ENCODE measurements at regions of chrX and their contacts with region 1.

Region 1: DNA sequence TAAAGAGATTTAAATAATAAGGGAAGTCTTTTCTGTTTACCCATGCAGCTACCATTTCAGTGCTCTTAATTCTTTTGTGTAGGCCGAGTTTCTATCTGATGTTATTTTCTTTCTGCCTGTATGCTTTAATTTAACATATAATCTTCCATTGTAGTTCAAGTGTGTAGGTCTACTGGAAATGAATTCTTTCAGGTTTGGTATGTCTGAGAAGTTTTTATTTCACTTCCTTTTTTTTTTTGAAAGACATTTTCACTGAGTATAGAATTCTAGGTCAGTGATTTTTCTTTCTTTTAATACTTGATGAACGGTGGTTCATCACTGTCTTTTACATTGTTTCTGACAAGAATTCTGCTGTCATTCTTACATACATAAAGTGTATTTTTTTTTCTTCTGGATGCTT is 42.1 kb downstream of the VAMP7 start:
- DNase-seq: no peak
- H3K4me3 ChIP-seq: no peak overlapping the region
- H3K27ac ChIP-seq: no peak overlapping the region
- H3K4me1 ChIP-seq: no peaks in the 10 kb centered on the region
- H3K27me3 ChIP-seq: no peaks in the 10 kb centered on the region
- CTCF ChIP-seq: no peak

Region 2: DNA sequence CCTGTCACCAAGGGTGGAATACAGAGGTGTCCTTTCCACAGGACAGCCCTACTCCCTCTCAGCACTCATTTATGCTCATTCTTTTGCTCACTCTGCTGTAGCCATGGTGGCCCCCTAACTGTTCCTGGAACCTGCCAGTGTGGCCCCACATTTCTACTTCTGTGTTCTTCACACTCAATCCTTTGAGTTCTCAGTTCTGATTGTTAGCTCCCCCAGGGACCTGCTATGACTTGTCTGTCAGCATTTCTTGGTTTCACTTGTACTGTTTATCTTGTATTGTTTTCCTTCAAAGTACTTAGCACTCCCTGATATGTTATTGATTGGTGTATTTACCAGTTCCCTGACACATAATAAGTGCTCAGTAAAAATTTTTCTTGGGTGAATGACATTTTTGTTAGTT is 692.0 kb before region 1 on chrX:
- intact Hi-C with region 1: loop called (anchors 5 kb)
- DNase-seq: no peak
- H3K4me3 ChIP-seq: no peak overlapping the region
- H3K27ac ChIP-seq: no peak overlapping the region
- H3K4me1 ChIP-seq: no peaks in the 10 kb centered on the region
- H3K27me3 ChIP-seq: no peaks in the 10 kb centered on the region
- CTCF ChIP-seq: no peak